Stomach (tissue), 19 donors: ENCODE measurements at regions of chr19 and their contacts with region 1.

Region 1: GRCh38 chr19:49799621-49800376 is 13.3 kb downstream of the FUZ start:
- DNase-seq: no peak
- H3K4me3 ChIP-seq: no peak overlapping the region
- H3K27ac ChIP-seq: no peak overlapping the region
- H3K4me1 ChIP-seq: peaks cover 0 to 22% (median 12%) of the 10 kb centered on the region in 4 donors
- H3K27me3 ChIP-seq: no peaks in the 10 kb centered on the region
- CTCF ChIP-seq: no peak
- EP300 ChIP-seq: no peak
- POLR2A ChIP-seq: no peak

Region 2: DNA sequence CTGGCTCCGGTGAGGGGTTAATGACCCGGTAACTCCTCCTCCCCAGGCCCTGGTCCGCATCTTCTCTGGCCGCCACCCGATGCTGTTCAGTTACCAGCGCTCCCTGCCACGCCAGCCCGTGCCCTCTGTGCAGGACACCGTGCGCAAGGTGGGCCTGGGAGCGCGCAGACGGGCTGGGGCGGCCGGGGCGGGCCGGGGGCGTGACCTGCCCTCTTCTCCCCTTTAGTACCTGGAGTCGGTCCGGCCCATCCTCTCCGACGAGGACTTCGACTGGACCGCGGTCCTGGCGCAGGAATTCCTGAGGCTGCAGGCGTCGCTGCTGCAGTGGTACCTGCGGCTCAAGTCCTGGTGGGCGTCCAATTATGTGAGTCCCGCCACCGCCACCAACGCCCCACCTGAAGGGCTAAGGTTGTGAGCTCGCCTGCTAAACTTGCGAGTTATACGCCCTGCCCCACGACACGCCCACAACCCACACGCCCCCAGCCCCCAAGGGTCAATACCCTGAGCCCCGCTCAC is 98.5 kb before region 1 on chr19:
- intact Hi-C with region 1: loop called (anchors 10 kb)
- DNase-seq: no peak
- H3K4me3 ChIP-seq: no peak overlapping the region
- H3K27ac ChIP-seq: no peak overlapping the region
- H3K4me1 ChIP-seq: peaks cover 0 to 4% (median 0%) of the 10 kb centered on the region in 4 donors
- H3K27me3 ChIP-seq: peaks cover 0 to 21% (median 9%) of the 10 kb centered on the region in 3 donors
- CTCF ChIP-seq: no peak
- EP300 ChIP-seq: no peak
- POLR2A ChIP-seq: no peak